Activated T-helper 2 cell treated with anti-CD3 and anti-CD28 coated beads, Interferon-gamma antibody, Interleukin-2, Interleukin-4, amounts not matched to agents 10 μg/mL and 5 μg/mL and 100 μg/mL, durations not matched to agents 14 hours and 24 hours and 36 hours (primary cell): ENCODE measurements at regions of chr20 and their contacts with region 1.

Region 1: DNA sequence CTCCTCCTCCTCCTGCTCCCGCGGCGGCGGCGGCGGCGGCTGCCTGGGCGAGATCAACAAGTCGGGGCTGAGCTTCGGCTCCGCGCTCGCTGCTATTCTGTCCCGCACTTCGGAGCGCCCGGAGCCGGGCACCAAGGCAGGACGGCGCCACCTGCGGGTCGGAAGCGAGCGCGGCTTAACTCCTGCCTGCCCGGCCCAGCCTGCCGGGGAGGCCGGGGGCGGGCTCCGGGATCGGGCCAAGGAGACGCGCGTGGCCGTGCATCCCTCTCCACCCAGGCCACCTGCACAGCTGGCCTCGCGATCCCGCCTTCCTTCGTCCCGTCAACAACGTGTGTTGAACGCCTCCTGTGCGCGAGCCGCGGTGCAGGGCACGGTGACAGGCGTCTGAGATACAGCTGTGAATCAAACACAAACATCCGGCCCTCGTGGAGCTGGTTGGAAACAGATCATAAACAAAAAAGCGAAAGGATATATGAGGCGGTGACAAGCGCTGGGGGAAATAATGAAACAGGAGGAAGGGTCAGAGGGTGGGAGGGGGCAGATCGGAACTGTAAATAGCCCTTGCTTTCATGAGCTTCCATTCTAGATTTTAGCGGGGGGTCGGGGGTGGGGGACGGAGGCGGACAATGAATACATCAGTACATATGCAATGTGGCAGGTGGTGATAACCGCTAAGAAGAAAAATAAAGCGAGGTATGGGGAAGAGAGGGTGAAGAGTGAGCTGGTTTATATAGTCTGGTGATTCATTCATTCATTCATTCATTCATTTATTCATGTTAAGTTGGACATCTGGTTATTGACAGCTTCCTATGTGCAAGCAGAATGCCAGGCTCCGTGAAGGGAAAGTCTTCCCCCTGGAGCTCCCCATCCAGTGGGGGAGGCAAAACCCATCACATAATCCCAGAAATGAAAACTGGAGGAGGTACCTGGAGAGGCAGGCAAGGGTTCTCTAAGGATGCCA is 2.0 kb upstream of the KCNB1 start:
- DNase-seq: peak; percentile 68
- H3K4me3 Mint-ChIP-seq: peak overlapping the region; percentile 83
- H3K27ac Mint-ChIP-seq: no peak overlapping the region
- H3K4me1 Mint-ChIP-seq: peaks cover 2% of the 10 kb centered on the region
- H3K27me3 Mint-ChIP-seq: peaks cover 50% of the 10 kb centered on the region

Region 2: GRCh38 chr20:49330544-49331239 is 153.8 kb before region 1 on chr20:
- intact Hi-C with region 1: loop called (anchors 5 kb)
- DNase-seq: no peak
- H3K4me3 Mint-ChIP-seq: no peak overlapping the region
- H3K27ac Mint-ChIP-seq: no peak overlapping the region
- H3K4me1 Mint-ChIP-seq: peaks cover 4% of the 10 kb centered on the region
- H3K27me3 Mint-ChIP-seq: peaks cover 49% of the 10 kb centered on the region

Region 3: DNA sequence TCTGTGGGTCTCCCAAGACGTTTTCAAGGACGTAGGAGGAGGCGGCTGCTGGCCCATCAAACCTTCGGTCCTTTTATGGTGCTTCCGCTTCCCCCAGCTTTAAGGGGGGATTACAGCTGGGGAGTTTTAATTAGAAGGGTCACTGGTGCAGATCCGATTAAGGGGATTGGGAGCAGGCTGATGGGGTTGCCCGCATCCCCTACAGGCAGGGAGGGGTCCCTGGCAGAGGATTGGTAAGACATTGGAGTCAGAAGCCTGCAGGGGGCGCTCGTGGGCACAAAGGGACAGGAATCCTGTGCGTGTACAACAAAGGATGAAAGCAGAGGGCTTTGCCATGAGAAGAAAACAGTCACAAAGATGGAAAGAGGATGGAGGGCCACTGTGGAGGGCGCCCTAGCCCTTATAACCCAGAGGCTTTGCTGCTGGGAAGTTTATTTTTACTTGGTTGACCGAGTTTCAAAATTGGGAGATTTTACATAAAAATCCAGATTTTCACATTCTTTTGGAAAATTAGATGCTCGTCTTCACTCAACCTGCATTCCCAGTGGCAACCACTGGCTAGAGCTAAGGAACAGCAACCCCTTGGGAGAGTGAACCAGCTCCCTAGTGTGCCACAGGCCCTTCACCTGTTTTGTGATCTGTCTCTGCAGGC is 99.9 kb before region 1 on chr20:
- intact Hi-C with region 1: loop called (anchors 1 kb)
- DNase-seq: peak; percentile 55
- H3K4me3 Mint-ChIP-seq: no peak overlapping the region
- H3K27ac Mint-ChIP-seq: no peak overlapping the region
- H3K4me1 Mint-ChIP-seq: no peaks in the 10 kb centered on the region
- H3K27me3 Mint-ChIP-seq: peaks cover 23% of the 10 kb centered on the region

Region 4: DNA sequence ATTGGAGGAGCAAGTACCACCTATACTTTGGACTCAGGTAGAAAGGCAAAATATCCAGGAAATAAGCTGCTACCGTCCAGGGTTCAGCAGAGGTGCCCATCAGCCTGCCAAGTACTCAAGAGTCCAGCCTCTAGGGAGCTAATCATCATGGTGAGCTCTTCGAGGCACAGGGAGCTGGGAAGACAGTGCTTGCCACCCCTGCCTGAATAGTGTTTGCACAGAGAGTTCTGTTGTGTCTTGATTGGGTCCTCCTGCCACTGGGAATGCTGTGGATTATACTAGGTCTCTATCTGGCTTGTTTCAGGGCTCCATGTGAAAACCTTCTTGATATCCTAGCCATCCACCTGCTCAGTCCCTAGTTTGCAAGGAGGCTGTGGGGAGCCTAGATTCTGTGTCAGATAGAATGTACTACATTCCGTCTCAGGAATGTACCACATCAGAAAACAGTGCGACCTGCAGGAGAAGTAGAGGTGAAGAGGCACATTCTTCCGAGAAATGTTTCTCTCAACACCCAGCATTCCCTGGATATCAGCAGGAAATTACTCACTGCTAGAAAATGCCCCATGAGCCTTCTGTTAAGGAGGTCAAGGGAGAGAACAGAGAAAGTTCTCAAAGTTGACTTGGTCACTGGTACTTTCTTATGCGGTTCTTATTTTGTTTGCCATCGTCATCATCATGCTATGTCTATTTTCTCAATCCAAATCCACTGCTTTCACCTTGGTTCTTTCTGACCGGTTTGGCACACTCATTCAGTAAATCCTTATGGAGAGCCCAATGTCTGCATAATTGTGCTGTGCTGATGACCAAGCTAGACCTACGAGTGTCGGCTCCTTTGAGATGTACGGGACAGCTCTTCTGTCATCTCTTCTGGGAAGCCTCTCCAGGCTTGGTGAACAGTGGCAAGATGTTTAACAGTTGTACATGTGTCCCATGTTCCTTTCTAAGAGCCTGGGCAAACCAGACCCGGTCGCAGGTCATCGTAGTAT is 1056.5 kb after region 1 on chr20:
- intact Hi-C with region 1: no loop called
- DNase-seq: no peak
- H3K4me3 Mint-ChIP-seq: no peak overlapping the region
- H3K27ac Mint-ChIP-seq: peak overlapping the region; percentile 61
- H3K4me1 Mint-ChIP-seq: peaks cover 62% of the 10 kb centered on the region
- H3K27me3 Mint-ChIP-seq: no peaks in the 10 kb centered on the region